ENCODE measurements at regions of chr4 and their contacts with region 1.

Region 1: GRCh38 chr4:61619528-61619927 is 419.4 kb downstream of the ADGRL3 start:
- DNase-seq: no peak
- ATAC-seq: no peak
- H3K4me3 ChIP-seq: no peak overlapping the region
- H3K4me3 Mint-ChIP-seq: no peak overlapping the region
- H3K27ac ChIP-seq: no peak overlapping the region
- H3K27ac Mint-ChIP-seq: no peak overlapping the region
- H3K4me1 ChIP-seq: no peaks in the 10 kb centered on the region
- H3K4me1 Mint-ChIP-seq: no peaks in the 10 kb centered on the region
- H3K27me3 ChIP-seq: no peaks in the 10 kb centered on the region
- H3K27me3 Mint-ChIP-seq: no peaks in the 10 kb centered on the region
- CTCF ChIP-seq: no peak

Region 2: DNA sequence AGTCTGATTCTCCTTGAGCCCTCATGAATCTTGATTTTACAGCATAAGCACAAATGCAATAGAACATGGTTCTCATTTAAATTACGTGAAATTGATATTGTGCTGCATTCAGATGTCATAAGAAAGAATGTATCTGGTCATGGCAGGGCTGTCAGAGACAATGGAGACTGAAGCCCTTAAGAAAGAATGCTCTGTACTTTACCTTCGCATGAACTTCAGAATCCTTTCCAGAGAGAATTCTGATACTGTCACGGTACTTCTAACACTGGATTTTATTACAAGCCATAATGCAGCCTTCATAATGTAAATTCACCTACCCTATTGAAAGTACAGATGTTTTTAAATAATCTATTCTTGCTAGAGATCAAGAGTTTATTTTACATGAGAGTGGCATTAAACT is 1097.3 kb before region 1 on chr4:
- CTCF ChIA-PET with region 1: no interaction called
- POLR2A ChIA-PET with region 1: no interaction called
- intact Hi-C with region 1: loop called in 1 of 2 experiments (anchors 5 kb)
- DNase-seq: no peak
- ATAC-seq: no peak
- H3K4me3 ChIP-seq: no peak overlapping the region
- H3K4me3 Mint-ChIP-seq: no peak overlapping the region
- H3K27ac ChIP-seq: no peak overlapping the region
- H3K27ac Mint-ChIP-seq: no peak overlapping the region
- H3K4me1 ChIP-seq: no peaks in the 10 kb centered on the region
- H3K4me1 Mint-ChIP-seq: no peaks in the 10 kb centered on the region
- H3K27me3 ChIP-seq: no peaks in the 10 kb centered on the region
- H3K27me3 Mint-ChIP-seq: no peaks in the 10 kb centered on the region
- CTCF ChIP-seq: no peak

Measured in CD8-positive, alpha-beta T cell (primary cell).